ENCODE measurements at regions of chr11 and their contacts with region 1.

Region 1: DNA sequence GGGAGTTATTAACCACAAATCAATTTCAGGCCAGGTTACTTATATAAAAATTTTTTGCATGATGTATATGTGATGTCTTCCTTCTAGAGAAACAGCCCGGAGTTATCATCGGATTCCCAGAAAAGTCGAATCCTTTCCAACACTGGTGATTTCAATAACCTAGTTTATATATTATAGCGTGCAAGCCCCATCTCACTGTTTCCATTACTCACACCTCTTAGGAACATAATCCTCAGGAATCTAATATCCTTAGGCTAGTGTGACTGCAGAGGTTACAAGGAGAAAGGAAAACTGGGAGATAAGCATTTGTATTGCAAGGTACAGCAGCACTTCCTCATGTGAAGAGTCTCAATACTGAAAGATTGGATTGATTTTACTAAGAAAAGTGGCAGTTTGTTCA is 20.3 kb downstream of the ARHGAP20 start:
- DNase-seq: no peak
- ATAC-seq: no peak
- H3K4me3 ChIP-seq: no peak overlapping the region
- H3K4me3 Mint-ChIP-seq: no peak overlapping the region
- H3K27ac ChIP-seq: no peak overlapping the region
- H3K27ac Mint-ChIP-seq: no peak overlapping the region
- H3K4me1 ChIP-seq: no peaks in the 10 kb centered on the region
- H3K4me1 Mint-ChIP-seq: no peaks in the 10 kb centered on the region
- H3K27me3 ChIP-seq: no peaks in the 10 kb centered on the region
- H3K27me3 Mint-ChIP-seq: peaks cover 2 to 7% of the 10 kb centered on the region in 2 donors

Region 2: GRCh38 chr11:110654456-110654855 is 37.5 kb before region 1 on chr11:
- CTCF ChIA-PET with region 1: no interaction called
- POLR2A ChIA-PET with region 1: no interaction called
- DNase-seq: no peak
- ATAC-seq: no peak
- H3K4me3 ChIP-seq: no peak overlapping the region
- H3K4me3 Mint-ChIP-seq: no peak overlapping the region
- H3K27ac ChIP-seq: no peak overlapping the region
- H3K27ac Mint-ChIP-seq: no peak overlapping the region
- H3K4me1 ChIP-seq: no peaks in the 10 kb centered on the region
- H3K4me1 Mint-ChIP-seq: no peaks in the 10 kb centered on the region
- H3K27me3 ChIP-seq: no peaks in the 10 kb centered on the region
- H3K27me3 Mint-ChIP-seq: peaks cover 15 to 47% of the 10 kb centered on the region in 2 donors

Region 3: GRCh38 chr11:110679323-110679975 is 12.5 kb before region 1 on chr11:
- CTCF ChIA-PET with region 1: no interaction called
- POLR2A ChIA-PET with region 1: no interaction called
- DNase-seq: no peak
- ATAC-seq: no peak
- H3K4me3 ChIP-seq: no peak overlapping the region
- H3K4me3 Mint-ChIP-seq: no peak overlapping the region
- H3K27ac ChIP-seq: no peak overlapping the region
- H3K27ac Mint-ChIP-seq: no peak overlapping the region
- H3K4me1 ChIP-seq: no peaks in the 10 kb centered on the region
- H3K4me1 Mint-ChIP-seq: no peaks in the 10 kb centered on the region
- H3K27me3 ChIP-seq: no peaks in the 10 kb centered on the region
- H3K27me3 Mint-ChIP-seq: peaks cover 0 to 7% of the 10 kb centered on the region in 2 donors

Region 4: GRCh38 chr11:110711776-110712658 is 20.1 kb after region 1 on chr11 and contains the start of gene ARHGAP20:
- CTCF ChIA-PET with region 1: interaction called in 1 of 2 experiments, 16 read pairs
- POLR2A ChIA-PET with region 1: no interaction called
- DNase-seq: peak in 19 of 35 experiments; percentile 3 to 54 (median 17)
- ATAC-seq: peak; percentile 74 to 89 (median 86)
- H3K4me3 ChIP-seq: peak within 1 kb of the TSS; percentile 40 to 85
- H3K4me3 Mint-ChIP-seq: peak within 1 kb of the TSS; percentile 62 to 74 (median 65)
- H3K27ac ChIP-seq: no peak within 1 kb of the TSS
- H3K27ac Mint-ChIP-seq: no peak within 1 kb of the TSS
- H3K4me1 ChIP-seq: peaks cover 11 to 23% of the 10 kb centered on the region in 2 experiments
- H3K4me1 Mint-ChIP-seq: peaks cover 14 to 17% (median 16%) of the 10 kb centered on the region in 3 donors
- H3K27me3 ChIP-seq: peaks cover 9 to 32% of the 10 kb centered on the region in 2 experiments
- H3K27me3 Mint-ChIP-seq: peaks cover 51 to 57% of the 10 kb centered on the region in 2 donors
- total RNA-seq, gene ARHGAP20: 0.03 to 0.09 (median 0.07) TPM in 3 of 5 donors, not detected in the others